ENCODE measurements at regions of chr2 and their contacts with region 1.

Region 1: DNA sequence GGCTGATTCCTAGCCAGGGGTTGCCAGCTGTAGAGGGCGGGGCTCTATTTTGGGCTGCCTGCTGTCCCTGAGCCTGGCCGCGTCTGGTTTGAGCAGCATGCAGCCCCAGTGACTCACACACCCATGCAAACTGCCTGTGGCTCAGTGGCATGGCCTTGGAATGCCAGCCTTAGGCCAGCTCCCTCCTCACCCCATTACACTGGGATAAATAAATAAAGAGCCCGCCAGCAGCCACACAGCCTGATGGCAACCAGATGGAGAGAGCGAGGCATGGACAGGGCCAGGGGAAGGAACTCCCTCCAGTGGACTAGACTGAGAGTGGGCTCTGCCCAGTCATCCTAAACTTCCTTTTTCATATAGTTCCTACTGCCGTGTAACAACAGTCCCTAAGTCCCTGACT is 18.3 kb downstream of the NHEJ1 start:
- DNase-seq: peak; percentile 67
- ATAC-seq: peak; percentile 98
- H3K4me3 ChIP-seq: no peak overlapping the region
- H3K27ac ChIP-seq: no peak overlapping the region
- H3K4me1 ChIP-seq: peaks cover 5% of the 10 kb centered on the region
- H3K27me3 ChIP-seq: no peaks in the 10 kb centered on the region
- CTCF ChIP-seq: peak; percentile 33; the same call in 1 of the 2 replicates
- POLR2A ChIP-seq: no peak
- RAD21 ChIP-seq: 0 out of 2 replicates have a peak, but pooled peaks have one; percentile 10

Region 2: DNA sequence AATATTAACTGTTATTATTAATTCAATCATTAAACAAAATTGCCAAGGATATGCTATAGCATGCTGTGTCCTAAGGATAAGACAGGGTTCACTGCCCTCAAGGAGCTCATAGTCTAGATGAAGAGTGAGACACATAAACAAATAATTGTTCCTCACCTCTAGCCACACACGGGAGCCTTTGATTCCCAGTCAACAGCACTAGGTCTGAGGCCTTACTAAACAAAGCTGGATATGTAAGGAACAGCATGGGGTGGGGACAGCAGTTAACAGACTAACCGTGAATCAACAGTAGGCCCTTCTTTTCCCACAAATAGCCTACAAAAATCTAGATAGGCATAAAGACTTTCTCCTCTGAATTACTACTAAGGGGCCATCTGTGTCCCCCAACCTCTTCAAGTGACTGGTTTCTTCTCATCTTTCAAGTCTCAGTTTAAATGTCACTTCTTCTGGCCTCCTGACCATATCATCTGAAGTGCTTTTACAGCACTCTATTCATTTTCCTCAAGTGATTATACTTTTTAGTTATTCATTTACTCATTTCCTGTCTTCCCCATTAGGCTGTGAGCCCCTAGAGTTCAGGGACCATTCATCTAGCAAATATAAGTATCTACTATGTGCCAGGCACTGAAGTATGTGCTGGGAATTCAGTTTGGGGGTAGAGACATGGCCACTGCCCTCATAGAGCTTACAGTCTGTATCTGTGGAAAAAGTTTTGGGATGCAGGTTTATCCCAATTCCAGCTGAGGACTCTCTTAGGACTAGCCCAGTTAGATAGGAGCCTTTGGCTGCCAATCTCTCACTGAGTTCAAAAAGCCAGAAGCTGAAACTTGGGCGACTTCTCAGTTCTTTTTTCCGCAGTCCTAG is 51.7 kb before region 1 on chr2:
- CTCF ChIA-PET with region 1: no interaction called
- POLR2A ChIA-PET with region 1: no interaction called
- dilution Hi-C with region 1: no loop called
- in situ Hi-C with region 1: no loop called
- intact Hi-C with region 1: loop called (anchors 5 kb)
- DNase-seq: no peak
- ATAC-seq: no peak
- H3K4me3 ChIP-seq: no peak overlapping the region
- H3K27ac ChIP-seq: no peak overlapping the region
- H3K4me1 ChIP-seq: no peaks in the 10 kb centered on the region
- H3K27me3 ChIP-seq: no peaks in the 10 kb centered on the region; the same call in 1 of the 2 replicates
- CTCF ChIP-seq: no peak
- POLR2A ChIP-seq: no peak
- RAD21 ChIP-seq: no peak

Region 3: GRCh38 chr2:219206442-219207253 is 64.3 kb after region 1 on chr2 and contains the start of gene ZFAND2B:
- CTCF ChIA-PET with region 1: no interaction called
- POLR2A ChIA-PET with region 1: no interaction called
- dilution Hi-C with region 1: no loop called
- in situ Hi-C with region 1: no loop called
- intact Hi-C with region 1: no loop called
- DNase-seq: peak; percentile 88
- ATAC-seq: peak; percentile 96
- H3K4me3 ChIP-seq: peak within 1 kb of the TSS; percentile 84
- H3K27ac ChIP-seq: peak within 1 kb of the TSS; percentile 96
- H3K4me1 ChIP-seq: peaks cover 16% of the 10 kb centered on the region
- H3K27me3 ChIP-seq: no peaks in the 10 kb centered on the region
- CTCF ChIP-seq: no peak
- POLR2A ChIP-seq: peak; percentile 88
- RAD21 ChIP-seq: no peak; the same call in 1 of the 2 replicates
- total RNA-seq, gene ZFAND2B: 21.9 and 25.5 TPM in 2 replicates

Region 4: GRCh38 chr2:219308142-219309093 is 166.1 kb after region 1 on chr2:
- CTCF ChIA-PET with region 1: no interaction called
- POLR2A ChIA-PET with region 1: no interaction called
- dilution Hi-C with region 1: no loop called
- in situ Hi-C with region 1: no loop called
- intact Hi-C with region 1: no loop called
- DNase-seq: peak; percentile 65
- ATAC-seq: peak; percentile 98
- H3K4me3 ChIP-seq: peak overlapping the region; percentile 59
- H3K27ac ChIP-seq: peak overlapping the region; percentile 32; the same call in 1 of the 2 replicates
- H3K4me1 ChIP-seq: peaks cover 6% of the 10 kb centered on the region; the same call in 1 of the 2 replicates
- H3K27me3 ChIP-seq: no peaks in the 10 kb centered on the region; the same call in 1 of the 2 replicates
- CTCF ChIP-seq: no peak
- POLR2A ChIP-seq: 0 out of 2 replicates have a peak, but pooled peaks have one; percentile 13
- RAD21 ChIP-seq: no peak

Measured in IMR-90 (cell line).